Mammary epithelial cell (primary cell): ENCODE measurements at regions of chr3 and their contacts with region 1.

Region 1: DNA sequence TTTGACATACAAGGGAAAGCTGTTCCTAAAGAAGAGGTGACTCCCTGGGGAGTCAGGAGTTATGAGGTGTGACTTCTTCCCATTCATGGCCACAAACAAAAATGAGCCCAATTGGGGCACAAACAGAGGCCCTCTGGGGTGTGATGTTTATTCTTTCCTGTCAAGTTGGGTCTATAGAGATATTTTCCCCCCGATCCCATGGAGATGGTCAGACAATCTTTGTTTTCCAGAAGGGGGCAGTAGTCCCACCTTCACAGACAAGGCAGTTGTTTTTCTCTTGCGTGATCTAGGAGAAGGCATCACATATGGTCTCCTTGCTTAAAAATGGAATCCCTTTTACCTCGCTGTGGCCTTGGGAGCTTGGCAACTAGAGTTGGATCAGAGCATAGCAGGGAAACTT is 110.3 kb downstream of the MFSD1 start:
- DNase-seq: no peak
- H3K4me3 ChIP-seq: no peak overlapping the region
- H3K27ac ChIP-seq: no peak overlapping the region
- H3K4me1 ChIP-seq: no peaks in the 10 kb centered on the region
- H3K27me3 ChIP-seq: no peaks in the 10 kb centered on the region
- CTCF ChIP-seq: no peak

Region 2: GRCh38 chr3:158875700-158876099 is 36.5 kb before region 1 on chr3:
- CTCF ChIA-PET with region 1: no interaction called
- dilution Hi-C with region 1: loop called (anchors 5 kb)
- in situ Hi-C with region 1: no loop called
- intact Hi-C with region 1: no loop called
- DNase-seq: no peak
- H3K4me3 ChIP-seq: no peak overlapping the region
- H3K27ac ChIP-seq: no peak overlapping the region
- H3K4me1 ChIP-seq: no peaks in the 10 kb centered on the region
- H3K27me3 ChIP-seq: peaks cover 5% of the 10 kb centered on the region
- CTCF ChIP-seq: no peak